ENCODE measurements at regions of chr6 and their contacts with region 1.

Region 1: DNA sequence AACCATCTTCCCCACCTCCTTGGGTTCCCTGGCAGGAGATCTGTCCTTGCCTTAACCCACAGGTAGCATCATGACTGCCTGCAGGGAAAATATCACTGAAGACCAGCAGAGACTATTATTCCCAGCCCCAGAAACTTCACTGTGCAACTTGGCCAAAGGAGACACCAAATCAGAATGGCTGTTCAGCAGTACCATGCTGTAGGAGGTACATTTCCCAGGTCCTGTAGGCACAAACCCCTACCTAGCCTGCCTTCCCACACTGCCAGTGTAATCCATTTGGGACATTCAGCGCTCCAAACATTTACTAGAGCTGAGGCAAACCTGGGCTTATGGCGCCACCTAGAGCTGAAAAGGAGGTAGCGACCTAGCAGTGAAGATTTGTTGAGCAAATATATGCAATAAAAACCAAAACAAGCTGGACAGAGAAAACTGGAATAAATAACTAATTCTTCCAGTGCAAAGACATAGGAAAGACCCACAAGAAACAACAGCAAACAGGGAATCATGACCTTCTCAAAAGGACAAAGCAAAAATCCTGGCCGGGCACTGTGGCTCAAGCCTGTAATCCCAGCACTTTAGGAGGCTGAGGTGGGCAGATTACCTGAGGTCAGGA is 60.3 kb downstream of the VTA1 start:
- DNase-seq: peak; percentile 64
- ATAC-seq: peak; percentile 90
- H3K4me3 ChIP-seq: no peak overlapping the region
- H3K27ac ChIP-seq: no peak overlapping the region
- H3K4me1 ChIP-seq: no peaks in the 10 kb centered on the region
- H3K27me3 ChIP-seq: no peaks in the 10 kb centered on the region
- CTCF ChIP-seq: peak; percentile 89
- POLR2A ChIP-seq: no peak
- RAD21 ChIP-seq: peak; percentile 93

Region 2: DNA sequence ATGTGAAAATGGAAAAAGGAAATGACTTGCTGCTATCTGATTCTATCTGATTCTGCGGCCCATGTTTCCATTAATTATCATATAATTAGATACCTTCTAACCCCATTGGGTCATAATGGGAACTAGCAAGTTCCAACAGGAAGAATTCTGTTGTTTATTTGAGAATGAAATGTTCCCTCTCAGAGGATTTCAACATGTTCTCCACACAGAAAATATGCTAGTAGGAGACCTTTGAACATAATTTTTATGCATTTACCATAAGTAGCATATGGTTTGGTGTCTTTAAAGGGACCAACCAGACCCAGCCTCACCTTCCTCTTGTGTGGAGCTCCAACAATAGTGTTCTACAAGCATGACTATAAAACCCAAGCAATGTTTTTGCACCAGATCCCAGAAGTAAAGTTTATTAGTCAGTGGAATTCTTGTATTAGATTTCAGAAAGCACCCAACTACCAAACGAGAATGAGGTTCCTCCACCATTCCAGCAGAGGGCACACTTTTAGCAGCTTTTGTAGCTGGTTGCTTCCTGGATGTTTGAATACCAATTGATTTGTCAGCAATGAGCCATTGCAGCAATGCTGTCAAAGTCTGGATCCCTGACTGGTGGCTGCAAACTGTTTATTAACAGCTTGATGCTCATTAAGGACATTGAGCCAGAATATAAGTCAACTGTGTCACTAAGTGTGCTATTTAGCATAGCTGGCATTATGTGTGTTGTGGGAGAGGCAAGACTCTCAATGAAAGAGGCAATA is 218.2 kb before region 1 on chr6:
- CTCF ChIA-PET with region 1: no interaction called
- POLR2A ChIA-PET with region 1: no interaction called
- dilution Hi-C with region 1: no loop called
- in situ Hi-C with region 1: no loop called
- intact Hi-C with region 1: loop called (anchors 5 kb)
- DNase-seq: peak; percentile 81
- ATAC-seq: peak; percentile 91
- H3K4me3 ChIP-seq: no peak overlapping the region
- H3K27ac ChIP-seq: no peak overlapping the region
- H3K4me1 ChIP-seq: peaks cover 2% of the 10 kb centered on the region; the same call in 1 of the 2 replicates
- H3K27me3 ChIP-seq: no peaks in the 10 kb centered on the region
- CTCF ChIP-seq: peak; percentile 84
- POLR2A ChIP-seq: peak; percentile 44; the same call in 1 of the 2 replicates
- RAD21 ChIP-seq: peak; percentile 91

Region 3: GRCh38 chr6:142195862-142196541 is 11.4 kb before region 1 on chr6:
- CTCF ChIA-PET with region 1: interaction called, 10 read pairs
- POLR2A ChIA-PET with region 1: interaction called, 5 read pairs
- dilution Hi-C with region 1: no loop called
- in situ Hi-C with region 1: no loop called
- intact Hi-C with region 1: no loop called
- DNase-seq: peak; percentile 44
- ATAC-seq: no peak
- H3K4me3 ChIP-seq: no peak overlapping the region
- H3K27ac ChIP-seq: no peak overlapping the region
- H3K4me1 ChIP-seq: no peaks in the 10 kb centered on the region
- H3K27me3 ChIP-seq: no peaks in the 10 kb centered on the region
- CTCF ChIP-seq: no peak
- POLR2A ChIP-seq: no peak
- RAD21 ChIP-seq: no peak

Region 4: GRCh38 chr6:142387997-142388815 is 180.8 kb after region 1 on chr6:
- CTCF ChIA-PET with region 1: no interaction called
- POLR2A ChIA-PET with region 1: no interaction called
- dilution Hi-C with region 1: no loop called
- in situ Hi-C with region 1: no loop called
- intact Hi-C with region 1: loop called (anchors 1 kb)
- DNase-seq: peak; percentile 74
- ATAC-seq: peak; percentile 97
- H3K4me3 ChIP-seq: no peak overlapping the region
- H3K27ac ChIP-seq: no peak overlapping the region
- H3K4me1 ChIP-seq: peaks cover 5% of the 10 kb centered on the region
- H3K27me3 ChIP-seq: no peaks in the 10 kb centered on the region
- CTCF ChIP-seq: peak; percentile 79
- POLR2A ChIP-seq: no peak
- RAD21 ChIP-seq: peak; percentile 83

Region 5: DNA sequence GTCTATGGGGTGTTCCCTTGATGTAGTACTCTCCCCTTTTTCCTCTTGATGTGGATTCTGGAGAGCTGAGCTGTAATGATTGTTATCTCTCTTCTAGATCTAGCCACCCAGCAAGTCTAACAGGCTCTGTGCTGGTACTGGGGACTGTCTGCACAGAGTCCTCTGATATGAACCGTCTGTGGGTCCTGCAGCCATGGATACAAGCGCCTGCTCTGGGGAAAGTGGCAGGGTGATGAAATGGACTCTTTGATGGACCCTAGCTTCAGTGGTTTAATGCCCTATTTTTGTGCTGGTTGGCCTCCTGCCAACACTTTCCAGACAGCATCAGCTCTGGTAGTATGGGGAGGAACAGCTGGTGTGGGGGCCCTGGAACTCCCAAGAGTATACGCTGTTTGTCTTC is 310.7 kb after region 1 on chr6:
- CTCF ChIA-PET with region 1: no interaction called
- POLR2A ChIA-PET with region 1: no interaction called
- dilution Hi-C with region 1: no loop called
- in situ Hi-C with region 1: no loop called
- intact Hi-C with region 1: no loop called
- DNase-seq: no peak
- ATAC-seq: no peak
- H3K4me3 ChIP-seq: no peak overlapping the region
- H3K27ac ChIP-seq: no peak overlapping the region
- H3K4me1 ChIP-seq: no peaks in the 10 kb centered on the region
- H3K27me3 ChIP-seq: no peaks in the 10 kb centered on the region; the same call in 1 of the 2 replicates
- CTCF ChIP-seq: no peak
- POLR2A ChIP-seq: no peak
- RAD21 ChIP-seq: no peak